CD4-positive, alpha-beta T cell (primary cell): ENCODE measurements at regions of chr6 and their contacts with region 1.

Region 1: DNA sequence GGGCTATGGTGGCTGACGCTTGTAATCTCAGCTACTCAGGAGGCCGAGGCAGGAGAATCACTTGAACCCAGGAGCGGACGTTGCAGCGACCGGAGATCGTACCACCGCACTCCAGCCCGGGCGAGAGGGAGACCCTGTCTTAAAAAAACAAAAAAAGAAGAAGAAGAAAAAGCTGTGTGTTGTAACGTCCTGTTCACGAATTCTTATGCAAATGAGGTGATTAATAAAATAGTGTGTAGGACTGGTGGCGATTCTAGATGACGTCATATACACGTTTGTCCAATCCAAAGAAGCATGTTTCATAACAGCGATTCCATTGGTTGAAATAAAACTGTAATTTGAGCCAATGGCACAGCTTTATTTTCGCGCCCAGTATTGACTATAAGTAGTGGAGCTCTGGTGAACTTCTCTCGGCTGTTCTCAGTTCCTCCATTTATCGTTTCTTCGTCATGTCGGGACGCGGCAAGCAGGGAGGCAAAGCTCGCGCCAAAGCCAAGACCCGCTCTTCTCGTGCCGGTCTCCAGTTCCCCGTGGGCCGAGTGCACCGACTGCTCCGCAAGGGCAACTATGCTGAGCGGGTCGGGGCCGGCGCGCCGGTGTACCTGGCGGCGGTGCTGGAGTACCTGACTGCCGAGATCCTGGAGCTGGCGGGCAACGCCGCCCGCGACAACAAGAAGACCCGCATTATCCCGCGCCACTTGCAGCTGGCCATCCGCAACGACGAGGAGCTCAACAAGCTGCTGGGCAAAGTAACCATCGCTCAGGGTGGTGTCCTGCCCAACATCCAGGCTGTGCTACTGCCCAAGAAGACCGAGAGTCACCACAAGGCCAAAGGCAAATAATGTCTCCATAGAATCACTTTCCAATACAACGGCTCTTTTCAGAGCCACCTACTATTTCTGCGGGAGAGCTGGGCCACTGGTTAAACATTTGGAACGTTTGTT is 47.0 kb downstream of the OR2B2 start:
- DNase-seq: peak in 13 of 14 experiments; percentile 35 to 97 (median 61)
- ATAC-seq: peak; percentile 83
- H3K4me3 ChIP-seq: peak overlapping the region; percentile 59
- H3K4me3 Mint-ChIP-seq: peak overlapping the region; percentile 100
- H3K27ac ChIP-seq: peak overlapping the region; percentile 54 to 78
- H3K27ac Mint-ChIP-seq: peak overlapping the region; percentile 93
- H3K4me1 ChIP-seq: peaks cover 38% of the 10 kb centered on the region
- H3K4me1 Mint-ChIP-seq: peaks cover 41% of the 10 kb centered on the region
- H3K27me3 ChIP-seq: no peaks in the 10 kb centered on the region
- H3K27me3 Mint-ChIP-seq: peaks cover 3% of the 10 kb centered on the region
- CTCF ChIP-seq: no peak

Region 2: GRCh38 chr6:27825025-27825793 is 40.0 kb before region 1 on chr6:
- CTCF ChIA-PET with region 1: interaction called, 6 read pairs
- POLR2A ChIA-PET with region 1: interaction called, 1,427 read pairs
- intact Hi-C with region 1: no loop called
- DNase-seq: peak in 2 of 14 experiments; percentile 27 to 38
- ATAC-seq: no peak
- H3K4me3 ChIP-seq: peak overlapping the region; percentile 82
- H3K4me3 Mint-ChIP-seq: peak overlapping the region; percentile 90
- H3K27ac ChIP-seq: peak overlapping the region; percentile 77 to 87
- H3K27ac Mint-ChIP-seq: peak overlapping the region; percentile 99
- H3K4me1 ChIP-seq: peaks cover 8% of the 10 kb centered on the region
- H3K4me1 Mint-ChIP-seq: peaks cover 38% of the 10 kb centered on the region
- H3K27me3 ChIP-seq: no peaks in the 10 kb centered on the region
- H3K27me3 Mint-ChIP-seq: no peaks in the 10 kb centered on the region
- CTCF ChIP-seq: no peak

Region 3: DNA sequence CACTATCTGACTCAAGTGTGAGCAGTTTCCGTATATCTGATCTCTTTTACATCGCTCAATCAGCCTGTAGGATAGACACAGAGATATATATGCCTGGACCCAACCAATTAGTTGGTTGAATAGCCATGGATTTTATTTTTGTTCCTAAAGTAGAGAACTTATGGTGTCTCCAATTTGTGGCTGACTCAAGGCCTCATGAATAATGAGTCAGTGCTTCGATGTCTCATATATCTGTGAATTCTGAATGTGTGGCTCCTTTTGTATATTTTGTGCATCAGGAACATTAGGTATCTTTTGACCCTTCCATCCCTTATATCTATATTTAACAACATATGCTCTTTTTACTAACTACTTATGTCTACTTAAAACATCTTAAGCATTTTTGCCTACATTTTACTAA is 17.5 kb before region 1 on chr6:
- CTCF ChIA-PET with region 1: interaction called, 3 read pairs
- POLR2A ChIA-PET with region 1: interaction called, 6 read pairs
- intact Hi-C with region 1: loop called in 1 of 2 experiments (anchors 2 kb)
- DNase-seq: no peak
- ATAC-seq: no peak
- H3K4me3 ChIP-seq: no peak overlapping the region
- H3K4me3 Mint-ChIP-seq: no peak overlapping the region
- H3K27ac ChIP-seq: no peak overlapping the region
- H3K27ac Mint-ChIP-seq: no peak overlapping the region
- H3K4me1 ChIP-seq: no peaks in the 10 kb centered on the region
- H3K4me1 Mint-ChIP-seq: no peaks in the 10 kb centered on the region
- H3K27me3 ChIP-seq: no peaks in the 10 kb centered on the region
- H3K27me3 Mint-ChIP-seq: no peaks in the 10 kb centered on the region
- CTCF ChIP-seq: no peak